ENCODE measurements at regions of chr6 and their contacts with region 1.

Region 1: DNA sequence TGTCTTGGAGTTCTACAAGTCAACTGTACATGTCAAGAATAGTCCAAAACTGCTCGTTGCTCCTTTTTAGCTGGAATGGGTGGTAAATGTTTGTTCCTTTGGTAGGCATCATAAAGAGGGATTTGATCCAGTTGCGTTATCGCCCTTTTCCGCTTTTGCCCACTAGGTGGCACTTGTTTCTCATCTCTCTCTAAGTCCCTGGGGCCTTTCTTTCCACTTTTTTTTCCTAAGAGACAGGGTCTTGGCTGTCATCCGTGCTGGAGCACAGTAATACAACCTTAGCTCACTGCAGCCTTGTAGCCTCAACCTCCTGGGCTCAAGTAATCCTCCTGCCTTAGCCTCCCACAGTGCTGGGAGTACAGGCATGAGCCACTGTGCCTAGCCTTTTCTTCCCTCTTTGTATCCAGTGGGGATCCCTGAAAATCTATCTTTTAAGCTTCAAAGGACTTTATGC is 20.7 kb downstream of the GTPBP2 start:
- DNase-seq: peak; percentile 56
- CTCF ChIP-seq: peak; percentile 52

Region 2: DNA sequence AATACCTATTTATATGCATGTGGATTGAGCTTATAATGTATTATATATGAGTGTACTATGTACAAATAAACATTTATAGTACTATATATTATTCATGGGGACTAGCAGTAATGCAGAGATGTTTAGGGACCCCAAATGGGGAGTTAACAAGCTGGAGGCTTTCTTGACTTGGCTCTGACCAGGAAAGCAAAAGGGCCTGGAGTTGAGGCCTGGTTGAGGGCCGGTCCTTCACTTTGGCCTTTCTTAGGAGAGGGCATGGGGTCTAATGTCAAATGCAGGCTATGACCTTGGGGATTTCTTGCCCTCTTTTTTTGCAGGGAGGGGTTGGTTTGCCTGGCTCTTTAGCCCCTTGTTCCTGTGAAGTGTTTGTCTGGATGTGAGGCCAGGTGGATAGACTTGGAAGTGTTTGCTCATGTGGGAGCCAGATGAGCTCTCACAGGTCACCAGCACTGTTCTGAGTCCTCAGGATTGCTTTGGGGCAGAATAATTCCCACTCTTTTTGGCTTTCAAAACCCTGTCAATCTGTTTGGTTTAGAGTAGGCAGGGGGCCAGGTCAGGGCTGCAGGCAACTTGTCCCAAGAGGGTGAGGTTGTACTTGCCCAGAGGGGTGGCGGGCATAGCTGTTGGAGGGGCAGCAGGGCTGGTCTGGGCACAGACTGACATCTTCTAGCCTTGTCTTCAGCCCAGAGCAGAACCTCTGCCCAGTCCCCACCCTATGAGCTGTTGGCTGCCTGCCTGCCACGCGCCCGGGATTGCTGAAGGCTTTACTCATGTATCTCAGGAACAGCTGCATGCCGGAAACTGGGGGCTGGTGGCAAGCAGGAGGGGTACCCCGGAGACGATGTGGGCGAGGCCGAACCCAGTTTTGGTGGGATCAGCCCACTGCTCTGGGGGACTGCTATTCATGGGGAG is 116.3 kb before region 1 on chr6:
- CTCF ChIA-PET with region 1: no interaction called
- POLR2A ChIA-PET with region 1: no interaction called
- DNase-seq: no peak
- CTCF ChIP-seq: no peak

Region 3: DNA sequence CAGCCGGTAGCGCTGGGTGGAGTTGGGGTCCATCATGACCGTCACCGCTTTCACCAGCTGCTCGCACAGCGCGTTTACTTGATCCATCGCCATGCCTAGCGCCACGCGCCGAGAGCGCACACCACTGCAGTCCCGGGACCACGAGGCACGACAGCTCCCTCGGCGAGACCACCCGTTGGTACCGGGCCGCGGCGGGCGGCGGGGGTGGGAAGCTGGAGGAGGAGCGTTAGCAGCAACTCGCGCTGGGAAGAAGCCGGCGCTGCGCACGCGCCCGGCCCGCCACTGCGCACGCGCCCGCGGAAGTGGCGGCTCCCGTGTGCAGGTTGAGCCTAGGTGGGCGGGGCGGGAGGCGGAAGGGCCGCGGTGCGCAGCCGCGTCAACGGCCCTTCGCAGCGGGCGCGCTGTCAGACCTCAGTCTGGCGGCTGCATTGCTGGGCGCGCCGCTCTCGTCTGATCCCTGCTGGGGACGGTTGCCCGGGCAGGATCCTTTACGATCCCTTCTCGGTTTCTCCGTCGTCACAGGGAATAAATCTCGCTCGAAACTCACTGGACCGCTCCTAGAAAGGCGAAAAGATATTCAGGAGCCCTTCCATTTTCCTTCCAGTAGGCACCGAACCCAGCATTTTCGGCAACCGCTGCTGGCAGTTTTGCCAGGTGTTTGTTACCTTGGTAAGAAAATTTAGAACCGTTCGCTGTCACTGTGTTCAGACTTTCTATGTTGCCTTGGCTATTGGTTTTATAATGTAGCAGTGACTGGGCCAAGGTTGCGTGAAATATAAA is 32.4 kb before region 1 on chr6 and contains the starts of genes POLH and XPO5:
- CTCF ChIA-PET with region 1: interaction called, 16 read pairs
- POLR2A ChIA-PET with region 1: no interaction called
- DNase-seq: peak; percentile 98
- CTCF ChIP-seq: peak; percentile 17

Region 4: GRCh38 chr6:43584892-43585570 is 23.3 kb before region 1 on chr6:
- CTCF ChIA-PET with region 1: interaction called, 13 read pairs
- POLR2A ChIA-PET with region 1: no interaction called
- DNase-seq: no peak
- CTCF ChIP-seq: no peak

Region 5: DNA sequence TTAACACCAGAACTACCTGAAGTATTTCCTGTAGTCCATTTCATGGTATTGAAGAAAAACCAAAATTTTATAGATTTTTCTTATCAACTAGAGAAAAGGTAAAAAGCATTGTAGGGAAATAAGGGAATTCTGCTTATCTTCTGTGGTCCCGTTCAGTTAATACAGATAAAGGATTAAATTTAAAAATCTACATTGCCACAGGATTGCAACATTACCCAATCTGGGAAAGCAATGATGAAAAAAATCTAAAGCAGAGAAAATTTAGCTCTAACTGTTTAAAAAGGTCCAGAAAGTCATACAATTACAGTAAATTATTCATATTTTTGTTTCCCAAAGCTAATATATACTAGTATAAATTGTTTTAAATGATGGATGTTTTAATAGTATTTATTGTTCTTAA is 14.4 kb before region 1 on chr6:
- CTCF ChIA-PET with region 1: interaction called, 23 read pairs
- POLR2A ChIA-PET with region 1: no interaction called
- DNase-seq: no peak
- CTCF ChIP-seq: no peak

Region 6: GRCh38 chr6:43621429-43622180 is 13.3 kb after region 1 on chr6:
- CTCF ChIA-PET with region 1: interaction called, 37 read pairs
- POLR2A ChIA-PET with region 1: no interaction called
- DNase-seq: no peak
- CTCF ChIP-seq: no peak

Measured in GM10248 (cell line).